Naive thymus-derived CD4-positive, alpha-beta T cell (primary cell): ENCODE measurements at regions of chr2 and their contacts with region 1.

Region 1: GRCh38 chr2:193751299-193751698 is 1556.6 kb upstream of the TMEFF2 start:
- DNase-seq: no peak
- ATAC-seq: no peak
- H3K4me3 ChIP-seq: no peak overlapping the region
- H3K4me3 Mint-ChIP-seq: no peak overlapping the region
- H3K27ac ChIP-seq: no peak overlapping the region
- H3K27ac Mint-ChIP-seq: no peak overlapping the region
- H3K4me1 ChIP-seq: no peaks in the 10 kb centered on the region
- H3K4me1 Mint-ChIP-seq: no peaks in the 10 kb centered on the region
- H3K27me3 ChIP-seq: no peaks in the 10 kb centered on the region
- H3K27me3 Mint-ChIP-seq: no peaks in the 10 kb centered on the region

Region 2: GRCh38 chr2:193095775-193096174 is 655.5 kb before region 1 on chr2:
- CTCF ChIA-PET with region 1: no interaction called
- POLR2A ChIA-PET with region 1: no interaction called
- intact Hi-C with region 1: loop called in 1 of 2 experiments (anchors 5 kb)
- DNase-seq: no peak
- ATAC-seq: no peak
- H3K4me3 ChIP-seq: no peak overlapping the region
- H3K4me3 Mint-ChIP-seq: no peak overlapping the region
- H3K27ac ChIP-seq: no peak overlapping the region
- H3K27ac Mint-ChIP-seq: no peak overlapping the region
- H3K4me1 ChIP-seq: no peaks in the 10 kb centered on the region
- H3K4me1 Mint-ChIP-seq: no peaks in the 10 kb centered on the region
- H3K27me3 ChIP-seq: no peaks in the 10 kb centered on the region
- H3K27me3 Mint-ChIP-seq: no peaks in the 10 kb centered on the region